ENCODE measurements at regions of chr2 and their contacts with region 1.

Region 1: GRCh38 chr2:195656859-195657633 is at the start of gene SLC39A10:
- DNase-seq: peak; percentile 85 to 95 (median 88)
- ATAC-seq: peak; percentile 80
- H3K4me3 ChIP-seq: peak within 1 kb of the TSS; percentile 86
- H3K27ac ChIP-seq: peak within 1 kb of the TSS; percentile 96
- H3K4me1 ChIP-seq: peaks cover 9 to 11% of the 10 kb centered on the region in 2 experiments
- H3K27me3 ChIP-seq: no peaks in the 10 kb centered on the region
- CTCF ChIP-seq: peak in 2 of 3 experiments; percentile 11 to 29; a peak in 2 of 6 replicates
- EP300 ChIP-seq: no peak
- POLR2A ChIP-seq: peak; percentile 91
- RAD21 ChIP-seq: no peak; a peak in 2 of 4 replicates
- polyA plus RNA-seq, gene SLC39A10: 14.5 to 18.2 TPM

Region 2: DNA sequence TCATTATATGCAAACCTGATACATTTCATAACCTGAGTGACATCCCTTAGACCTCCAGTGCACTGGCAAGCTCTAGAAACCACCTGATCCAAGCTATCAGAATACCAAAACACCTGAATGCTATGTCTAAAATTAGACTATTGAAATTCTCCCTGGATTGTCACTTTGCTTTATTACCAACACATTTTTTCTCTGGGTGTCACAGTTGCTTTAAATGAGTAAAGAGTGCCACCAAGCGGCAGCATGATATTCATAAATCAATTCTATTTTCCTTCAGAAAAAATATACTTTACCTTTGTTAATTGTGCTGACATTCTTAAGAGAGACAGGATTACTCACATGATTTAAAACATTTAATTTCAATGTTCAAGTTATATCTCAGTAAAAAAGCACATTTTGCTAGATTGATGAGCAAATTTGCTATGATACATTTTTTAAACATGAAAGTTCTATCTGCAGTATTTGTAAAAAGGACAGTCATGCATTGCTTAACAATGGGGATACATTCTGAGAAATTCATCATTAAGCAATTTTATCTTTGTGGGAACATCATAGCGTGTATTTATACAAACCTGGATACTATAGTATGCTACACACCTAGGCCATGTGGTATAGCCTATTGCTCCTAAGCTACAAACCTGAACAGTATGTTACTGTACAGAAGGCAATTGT is 338.5 kb before region 1 on chr2:
- CTCF ChIA-PET with region 1: no interaction called
- POLR2A ChIA-PET with region 1: interaction called, 3 read pairs
- in situ Hi-C with region 1: loop called (anchors 10 kb)
- intact Hi-C with region 1: loop called (anchors 2 kb)
- DNase-seq: peak; percentile 7 to 68 (median 20)
- ATAC-seq: peak; percentile 69
- H3K4me3 ChIP-seq: no peak overlapping the region
- H3K27ac ChIP-seq: no peak overlapping the region
- H3K4me1 ChIP-seq: no peaks in the 10 kb centered on the region; a peak in 2 of 5 replicates
- H3K27me3 ChIP-seq: no peaks in the 10 kb centered on the region
- CTCF ChIP-seq: peak; percentile 33 to 72 (median 34); a peak in 4 of 6 replicates
- EP300 ChIP-seq: no peak
- POLR2A ChIP-seq: no peak
- RAD21 ChIP-seq: peak; percentile 78 to 79

Region 3: GRCh38 chr2:195498176-195498575 is 158.9 kb before region 1 on chr2:
- CTCF ChIA-PET with region 1: interaction called, 3 read pairs
- POLR2A ChIA-PET with region 1: no interaction called
- in situ Hi-C with region 1: no loop called
- intact Hi-C with region 1: loop called (anchors 1 kb)
- DNase-seq: peak in 1 of 4 experiments; percentile 55
- ATAC-seq: peak; percentile 79
- H3K4me3 ChIP-seq: no peak overlapping the region
- H3K27ac ChIP-seq: no peak overlapping the region
- H3K4me1 ChIP-seq: no peaks in the 10 kb centered on the region
- H3K27me3 ChIP-seq: no peaks in the 10 kb centered on the region
- CTCF ChIP-seq: peak; percentile 26 to 49 (median 26); a peak in 3 of 6 replicates
- EP300 ChIP-seq: no peak
- POLR2A ChIP-seq: no peak
- RAD21 ChIP-seq: peak; percentile 29 to 59; a peak in 2 of 4 replicates

Region 4: DNA sequence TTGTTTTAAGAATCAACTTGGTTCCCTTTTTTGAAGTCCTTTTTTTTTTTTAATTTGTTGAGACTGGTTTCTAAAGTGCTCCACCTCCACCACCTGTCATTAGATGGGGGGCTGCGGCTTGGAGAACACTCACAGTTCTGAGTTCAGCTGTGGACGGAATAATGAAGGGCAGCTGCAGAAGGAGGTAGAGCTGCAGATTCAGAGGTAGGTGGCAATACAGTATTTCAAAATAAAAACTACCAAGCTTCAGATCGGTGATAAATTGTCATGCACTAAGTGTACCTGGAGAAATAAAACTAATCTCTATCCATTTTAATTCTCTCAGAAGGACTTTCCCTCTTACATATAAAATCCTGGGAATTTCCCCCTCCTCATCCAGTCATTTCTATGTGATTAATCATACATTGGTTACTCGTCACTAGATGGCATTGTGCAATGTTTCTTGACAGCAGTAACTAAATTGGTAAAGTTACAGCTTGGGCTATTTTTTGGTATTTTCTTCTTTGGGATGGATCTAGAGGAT is 81.1 kb before region 1 on chr2:
- CTCF ChIA-PET with region 1: interaction called, 4 read pairs
- POLR2A ChIA-PET with region 1: no interaction called
- in situ Hi-C with region 1: no loop called
- intact Hi-C with region 1: loop called (anchors 1 kb)
- DNase-seq: peak in 1 of 4 experiments; percentile 32
- ATAC-seq: no peak; the same call in 2 of the 3 replicates
- H3K4me3 ChIP-seq: no peak overlapping the region
- H3K27ac ChIP-seq: no peak overlapping the region
- H3K4me1 ChIP-seq: peaks cover 0 to 14% of the 10 kb centered on the region in 2 experiments; a peak in 3 of 5 replicates
- H3K27me3 ChIP-seq: no peaks in the 10 kb centered on the region
- CTCF ChIP-seq: peak in 1 of 3 experiments; percentile 47; a peak in 2 of 6 replicates
- EP300 ChIP-seq: no peak
- POLR2A ChIP-seq: no peak
- RAD21 ChIP-seq: peak; percentile 38 to 71

Region 5: DNA sequence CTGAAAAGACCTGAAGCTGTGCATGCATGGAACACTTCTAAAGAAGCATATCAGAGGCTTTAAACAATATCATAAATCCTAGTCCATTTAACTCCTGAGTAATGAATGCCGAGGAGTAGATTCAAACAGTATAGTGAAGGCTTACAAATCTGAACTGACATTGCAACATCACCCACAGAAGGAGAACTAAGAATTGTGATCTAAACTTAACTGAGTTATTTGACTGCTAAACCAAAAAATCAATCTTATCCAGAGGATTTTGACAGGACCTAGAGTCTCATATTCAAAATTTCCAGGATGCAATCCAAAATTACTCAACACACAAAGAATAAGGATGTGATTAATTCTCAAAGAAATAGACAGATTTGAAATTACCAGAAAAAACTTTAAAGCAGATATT is 181.0 kb after region 1 on chr2:
- CTCF ChIA-PET with region 1: no interaction called
- POLR2A ChIA-PET with region 1: no interaction called
- in situ Hi-C with region 1: no loop called
- intact Hi-C with region 1: loop called (anchors 10 kb)
- DNase-seq: no peak
- ATAC-seq: no peak
- H3K4me3 ChIP-seq: no peak overlapping the region
- H3K27ac ChIP-seq: no peak overlapping the region
- H3K4me1 ChIP-seq: no peaks in the 10 kb centered on the region
- H3K27me3 ChIP-seq: no peaks in the 10 kb centered on the region
- CTCF ChIP-seq: no peak
- EP300 ChIP-seq: no peak
- POLR2A ChIP-seq: no peak
- RAD21 ChIP-seq: no peak

Region 6: GRCh38 chr2:196068271-196069209 is 411.5 kb after region 1 on chr2 and contains the start of gene DNAH7:
- CTCF ChIA-PET with region 1: no interaction called
- POLR2A ChIA-PET with region 1: interaction called, 3 read pairs
- in situ Hi-C with region 1: loop called (anchors 25 kb)
- intact Hi-C with region 1: loop called (anchors 5 kb)
- DNase-seq: peak; percentile 79 to 86 (median 84)
- ATAC-seq: peak; percentile 97
- H3K4me3 ChIP-seq: peak within 1 kb of the TSS; percentile 78
- H3K27ac ChIP-seq: peak within 1 kb of the TSS; percentile 71
- H3K4me1 ChIP-seq: peaks cover 2 to 8% of the 10 kb centered on the region in 2 experiments; a peak in 3 of 5 replicates
- H3K27me3 ChIP-seq: no peaks in the 10 kb centered on the region
- CTCF ChIP-seq: peak; percentile 76 to 79 (median 77)
- EP300 ChIP-seq: no peak
- POLR2A ChIP-seq: no peak; the same call in 1 of the 2 replicates
- RAD21 ChIP-seq: peak; percentile 62 to 68
- polyA plus RNA-seq, gene DNAH7: 0.03 to 0.14 TPM